Endothelial cell of umbilical vein (primary cell): ENCODE measurements at regions of chr3 and their contacts with region 1.

Region 1: GRCh38 chr3:32307591-32307990 is 69.1 kb downstream of the CMTM8 start:
- DNase-seq: no peak
- H3K4me3 ChIP-seq: no peak overlapping the region
- H3K27ac ChIP-seq: no peak overlapping the region
- H3K4me1 ChIP-seq: no peaks in the 10 kb centered on the region
- H3K27me3 ChIP-seq: no peaks in the 10 kb centered on the region
- CTCF ChIP-seq: no peak
- POLR2A ChIP-seq: no peak

Region 2: GRCh38 chr3:32296256-32297204 is 11.1 kb before region 1 on chr3:
- CTCF ChIA-PET with region 1: interaction called, 12 read pairs
- POLR2A ChIA-PET with region 1: no interaction called
- dilution Hi-C with region 1: no loop called
- intact Hi-C with region 1: no loop called
- DNase-seq: peak; percentile 68
- H3K4me3 ChIP-seq: no peak overlapping the region
- H3K27ac ChIP-seq: no peak overlapping the region
- H3K4me1 ChIP-seq: peaks cover 3% of the 10 kb centered on the region
- H3K27me3 ChIP-seq: no peaks in the 10 kb centered on the region
- CTCF ChIP-seq: peak; percentile 80 to 86
- POLR2A ChIP-seq: no peak

Region 3: GRCh38 chr3:32872487-32873382 is 565.1 kb after region 1 on chr3:
- CTCF ChIA-PET with region 1: no interaction called
- POLR2A ChIA-PET with region 1: no interaction called
- dilution Hi-C with region 1: no loop called
- intact Hi-C with region 1: no loop called
- DNase-seq: no peak
- H3K4me3 ChIP-seq: no peak overlapping the region
- H3K27ac ChIP-seq: no peak overlapping the region
- H3K4me1 ChIP-seq: no peaks in the 10 kb centered on the region
- H3K27me3 ChIP-seq: peaks cover 2 to 10% of the 10 kb centered on the region in 2 experiments
- CTCF ChIP-seq: no peak
- POLR2A ChIP-seq: no peak